Heart right ventricle (tissue), 16 donors: ENCODE measurements at regions of chr19 and their contacts with region 1.

Region 1: DNA sequence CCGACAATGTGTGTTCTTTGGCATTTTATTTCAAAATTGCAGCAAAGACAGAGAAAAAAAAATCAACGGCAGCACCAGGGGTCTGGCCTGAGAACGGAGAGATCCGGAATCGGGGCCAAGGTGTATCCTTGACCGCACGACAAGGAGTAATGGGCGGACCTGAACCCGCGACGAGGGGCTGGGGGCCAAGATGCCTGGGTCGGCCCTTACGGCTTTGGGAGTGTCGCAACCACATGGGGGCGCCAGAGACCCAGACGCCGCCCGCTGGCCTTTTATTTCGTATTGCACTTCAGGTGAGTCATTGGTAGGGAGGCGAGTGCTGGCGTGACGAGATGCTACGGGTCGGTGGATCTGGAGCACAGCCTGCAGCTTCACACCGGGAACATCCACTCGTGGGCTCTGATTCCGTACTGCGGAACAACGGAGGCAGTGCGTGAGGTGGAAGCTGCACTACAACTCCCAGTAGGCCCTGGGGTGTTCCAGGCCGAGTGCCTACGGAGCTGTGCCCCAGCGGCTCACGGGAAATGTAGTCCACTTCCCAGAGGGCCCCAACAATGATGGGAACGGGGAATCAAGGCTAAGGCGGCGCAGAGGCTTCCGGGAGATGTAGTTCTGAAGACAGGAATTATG is 15.7 kb downstream of the BCAT2 start:
- DNase-seq: peak; percentile 88 to 95
- ATAC-seq: peak; percentile 95 to 100 (median 98)
- H3K4me3 ChIP-seq: peak overlapping the region in 9 of 10 donors; percentile 35 to 66 (median 59)
- H3K27ac ChIP-seq: peak overlapping the region; percentile 3 to 88 (median 70)
- H3K4me1 ChIP-seq: peaks cover 0 to 18% (median 6%) of the 10 kb centered on the region in 9 donors
- H3K27me3 ChIP-seq: no peaks in the 10 kb centered on the region
- CTCF ChIP-seq: peak; percentile 90 to 100 (median 97)

Region 2: GRCh38 chr19:48553676-48554386 is 241.3 kb before region 1 on chr19:
- intact Hi-C with region 1: no loop called
- DNase-seq: peak in 1 of 2 donors; percentile 15
- ATAC-seq: peak in 1 of 8 donors; percentile 63
- H3K4me3 ChIP-seq: no peak overlapping the region
- H3K27ac ChIP-seq: no peak overlapping the region
- H3K4me1 ChIP-seq: peaks cover 0 to 4% (median 0%) of the 10 kb centered on the region in 9 donors
- H3K27me3 ChIP-seq: peaks cover 0 to 45% (median 16%) of the 10 kb centered on the region in 7 donors
- CTCF ChIP-seq: no peak

Region 3: DNA sequence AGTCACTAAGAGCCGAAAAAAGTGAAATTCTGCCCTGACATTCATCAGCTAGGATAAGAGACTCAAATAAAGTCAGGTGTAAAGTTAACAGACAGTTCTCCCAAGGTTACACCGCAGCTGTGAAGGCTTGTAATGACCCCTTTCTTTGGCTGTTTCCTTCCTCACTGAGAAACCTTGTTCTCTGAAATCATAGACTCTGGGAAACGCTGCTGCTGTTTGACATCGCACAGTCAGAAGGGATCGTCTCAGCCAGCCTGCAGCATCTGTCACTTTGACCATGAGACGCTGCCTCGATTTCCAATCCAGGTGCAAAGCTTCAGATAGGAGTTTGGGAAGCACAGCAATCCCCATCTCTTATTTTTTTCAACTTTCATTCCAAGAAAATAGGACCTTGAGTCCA is 15.0 kb after region 1 on chr19:
- intact Hi-C with region 1: loop called in 1 of 10 experiments (anchors 2 kb)
- DNase-seq: no peak
- ATAC-seq: no peak
- H3K4me3 ChIP-seq: peak overlapping the region; percentile 27 to 86 (median 65)
- H3K27ac ChIP-seq: peak overlapping the region in 9 of 10 donors; percentile 63 to 94 (median 90)
- H3K4me1 ChIP-seq: peaks cover 5 to 28% (median 22%) of the 10 kb centered on the region in 9 donors
- H3K27me3 ChIP-seq: no peaks in the 10 kb centered on the region
- CTCF ChIP-seq: no peak

Region 4: DNA sequence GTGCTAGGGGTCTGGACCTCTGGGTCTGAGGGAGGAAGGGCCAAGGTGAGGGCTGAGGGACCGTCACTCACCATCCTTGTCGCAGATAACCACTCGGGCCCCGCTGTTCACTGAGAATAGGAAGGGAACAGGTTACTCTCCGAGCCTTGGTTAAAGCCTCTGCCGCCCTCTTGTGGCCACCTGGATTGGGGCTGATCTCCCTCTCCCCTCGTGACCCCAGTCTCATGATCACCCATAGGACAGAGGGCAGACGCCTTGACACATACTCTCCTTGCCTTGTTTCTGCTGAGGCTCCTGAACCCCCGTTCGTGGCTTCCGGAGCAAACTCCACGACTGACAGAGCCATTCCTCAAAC is 40.5 kb after region 1 on chr19:
- intact Hi-C with region 1: loop called in 8 of 10 experiments (anchors 1 to 2 kb)
- DNase-seq: peak; percentile 93
- ATAC-seq: peak; percentile 91 to 96 (median 92)
- H3K4me3 ChIP-seq: peak overlapping the region; percentile 21 to 55 (median 42)
- H3K27ac ChIP-seq: peak overlapping the region in 8 of 10 donors; percentile 29 to 77 (median 64)
- H3K4me1 ChIP-seq: peaks cover 0 to 21% (median 10%) of the 10 kb centered on the region in 9 donors
- H3K27me3 ChIP-seq: peaks cover 0 to 4% (median 0%) of the 10 kb centered on the region in 7 donors
- CTCF ChIP-seq: peak; percentile 82 to 94 (median 90)

Region 5: GRCh38 chr19:48872182-48872883 is 77.2 kb after region 1 on chr19 and contains the start of gene PPP1R15A:
- intact Hi-C with region 1: no loop called
- DNase-seq: peak; percentile 98
- ATAC-seq: peak; percentile 59 to 88 (median 78)
- H3K4me3 ChIP-seq: peak within 1 kb of the TSS; percentile 69 to 100 (median 92)
- H3K27ac ChIP-seq: peak within 1 kb of the TSS; percentile 96 to 100 (median 100)
- H3K4me1 ChIP-seq: peaks cover 7 to 62% (median 53%) of the 10 kb centered on the region in 9 donors
- H3K27me3 ChIP-seq: no peaks in the 10 kb centered on the region
- CTCF ChIP-seq: peak in 2 of 9 donors; percentile 10 to 19
- total RNA-seq, gene PPP1R15A: 55.4 to 123 (median 73.7) TPM

Region 6: DNA sequence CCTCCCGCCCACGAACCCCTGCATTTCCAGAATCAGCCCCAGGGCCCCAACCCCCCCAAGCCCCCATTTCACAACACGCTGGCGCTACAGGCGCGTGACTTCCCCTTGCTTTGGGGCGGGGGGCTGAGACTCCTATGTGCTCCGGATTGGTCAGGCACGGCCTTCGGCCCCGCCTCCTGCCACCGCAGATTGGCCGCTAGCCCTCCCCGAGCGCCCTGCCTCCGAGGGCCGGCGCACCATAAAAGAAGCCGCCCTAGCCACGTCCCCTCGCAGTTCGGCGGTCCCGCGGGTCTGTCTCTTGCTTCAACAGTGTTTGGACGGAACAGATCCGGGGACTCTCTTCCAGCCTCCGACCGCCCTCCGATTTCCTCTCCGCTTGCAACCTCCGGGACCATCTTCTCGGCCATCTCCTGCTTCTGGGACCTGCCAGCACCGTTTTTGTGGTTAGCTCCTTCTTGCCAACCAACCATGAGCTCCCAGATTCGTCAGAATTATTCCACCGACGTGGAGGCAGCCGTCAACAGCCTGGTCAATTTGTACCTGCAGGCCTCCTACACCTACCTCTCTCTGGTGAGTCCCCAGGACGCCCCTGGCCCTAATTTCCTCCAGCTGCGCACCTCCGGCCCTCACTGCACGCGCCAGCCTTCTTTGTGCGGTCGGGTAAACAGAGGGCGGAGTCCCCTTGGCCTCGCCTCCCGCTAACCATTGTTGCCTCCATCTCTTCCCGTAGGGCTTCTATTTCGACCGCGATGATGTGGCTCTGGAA is 170.1 kb after region 1 on chr19 and contains the start of gene FTL:
- intact Hi-C with region 1: loop called in 9 of 10 experiments (anchors 2 to 10 kb)
- DNase-seq: peak; percentile 98
- ATAC-seq: peak; percentile 84 to 94 (median 91)
- H3K4me3 ChIP-seq: peak within 1 kb of the TSS; percentile 65 to 100 (median 88)
- H3K27ac ChIP-seq: peak within 1 kb of the TSS; percentile 84 to 96 (median 89)
- H3K4me1 ChIP-seq: peaks cover 15 to 62% (median 55%) of the 10 kb centered on the region in 9 donors
- H3K27me3 ChIP-seq: no peaks in the 10 kb centered on the region
- CTCF ChIP-seq: no peak
- total RNA-seq, gene FTL: 450 to 3,518 (median 637) TPM

Region 7: DNA sequence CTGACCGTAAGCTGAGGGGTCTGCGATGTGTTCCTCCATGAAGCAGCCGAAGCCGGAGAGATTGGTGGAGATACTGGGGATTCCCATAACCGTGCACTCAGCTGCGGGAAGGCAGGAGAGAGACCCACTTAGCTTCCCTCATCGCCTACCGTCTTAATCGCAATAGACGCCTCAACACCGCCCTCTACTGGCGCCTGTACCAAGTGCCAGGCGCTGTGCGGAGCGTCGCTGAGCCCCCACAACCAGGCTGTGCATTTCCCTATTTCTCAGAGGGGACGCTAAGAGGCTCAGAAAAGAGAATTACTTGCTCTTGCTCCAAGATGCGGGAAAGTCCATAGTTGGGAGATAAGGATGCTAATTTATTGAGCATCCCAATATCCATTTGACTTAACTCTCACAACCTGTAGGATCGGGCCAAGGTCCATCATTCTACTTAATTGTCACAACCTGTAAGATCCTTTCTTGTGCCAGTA is 175.8 kb after region 1 on chr19:
- intact Hi-C with region 1: loop called in 9 of 10 experiments (anchors 2 to 10 kb)
- DNase-seq: peak; percentile 79 to 85
- ATAC-seq: peak; percentile 7 to 69 (median 64)
- H3K4me3 ChIP-seq: no peak overlapping the region
- H3K27ac ChIP-seq: peak overlapping the region in 8 of 10 donors; percentile 3 to 68 (median 35)
- H3K4me1 ChIP-seq: peaks cover 5 to 51% (median 38%) of the 10 kb centered on the region in 9 donors
- H3K27me3 ChIP-seq: no peaks in the 10 kb centered on the region
- CTCF ChIP-seq: peak; percentile 75 to 95 (median 93)